Right ventricle myocardium inferior (tissue), 1 donor: ENCODE measurements at regions of chr20 and their contacts with region 1.

Region 1: GRCh38 chr20:46512943-46513844 is at the start of gene ZNF334:
- DNase-seq: peak; percentile 82
- ATAC-seq: peak; percentile 96
- total RNA-seq, gene ZNF334: 0.57 TPM

Region 2: GRCh38 chr20:46689082-46689754 is 176.0 kb after region 1 on chr20 and contains the start of gene TP53RK:
- intact Hi-C with region 1: loop called (anchors 5 kb)
- DNase-seq: peak; percentile 98
- ATAC-seq: peak; percentile 99
- total RNA-seq, gene TP53RK: 5.6 TPM